ENCODE measurements at regions of chr2 and their contacts with region 1.

Region 1: DNA sequence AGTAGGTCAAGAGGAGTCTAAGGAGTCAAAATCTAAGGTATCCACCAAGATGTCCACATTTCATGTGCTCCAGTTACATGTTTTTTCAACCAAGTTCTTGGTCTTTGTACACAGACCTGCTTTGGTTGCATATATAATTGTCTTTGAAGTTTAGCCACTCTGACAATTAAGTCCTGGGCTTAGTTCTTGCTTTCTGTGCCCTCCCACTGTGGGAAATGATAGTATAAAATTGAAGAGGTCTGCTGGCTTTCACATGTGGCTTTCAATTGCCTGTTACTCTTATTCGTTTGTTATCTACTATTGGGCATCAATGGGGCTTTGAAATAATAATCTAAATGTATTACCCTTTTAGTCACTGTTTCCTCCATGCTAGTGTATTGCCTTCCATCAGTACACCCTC is 72.8 kb downstream of the TBR1 start:
- DNase-seq: no peak
- ATAC-seq: no peak
- H3K4me3 Mint-ChIP-seq: no peak overlapping the region
- H3K27ac Mint-ChIP-seq: no peak overlapping the region
- H3K4me1 Mint-ChIP-seq: no peaks in the 10 kb centered on the region
- H3K27me3 Mint-ChIP-seq: peaks cover 11% of the 10 kb centered on the region

Region 2: DNA sequence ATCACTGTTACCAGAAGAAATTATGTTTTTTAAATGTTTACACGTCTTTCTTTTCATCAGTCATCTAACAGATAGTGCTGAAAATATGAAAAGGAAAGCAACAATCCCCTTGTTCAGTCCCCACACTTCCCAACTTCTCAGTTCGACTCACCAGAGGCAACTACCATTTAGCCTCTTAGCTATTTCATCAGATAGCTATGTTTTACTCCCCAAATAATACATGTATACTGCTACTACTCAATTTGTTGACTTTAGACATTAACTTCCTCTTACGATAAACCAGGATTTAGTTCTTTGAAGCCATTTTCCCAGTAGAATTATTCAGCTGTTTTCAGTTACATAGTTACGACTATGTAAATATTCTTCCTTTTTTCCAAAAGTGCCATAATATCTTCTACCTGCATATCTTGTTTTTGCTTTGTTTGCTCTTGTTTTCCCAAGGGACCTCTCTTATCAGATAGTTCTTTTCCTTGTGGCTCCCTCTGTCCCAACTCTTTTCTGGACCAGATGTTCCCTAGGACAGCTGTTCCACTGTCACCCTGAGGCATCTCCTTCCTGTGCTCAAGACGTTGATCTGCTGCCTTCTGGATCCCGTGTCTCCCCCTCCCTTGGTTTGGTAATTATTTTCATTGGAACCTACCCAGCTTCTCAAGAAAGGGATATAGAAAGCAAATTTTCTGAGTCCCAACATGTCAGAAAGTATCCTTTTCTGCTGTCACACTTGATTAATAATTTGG is 618.0 kb before region 1 on chr2:
- CTCF ChIA-PET with region 1: no interaction called
- POLR2A ChIA-PET with region 1: interaction called, 10 read pairs
- intact Hi-C with region 1: no loop called
- DNase-seq: no peak
- ATAC-seq: no peak
- H3K4me3 Mint-ChIP-seq: no peak overlapping the region
- H3K27ac Mint-ChIP-seq: no peak overlapping the region
- H3K4me1 Mint-ChIP-seq: no peaks in the 10 kb centered on the region
- H3K27me3 Mint-ChIP-seq: no peaks in the 10 kb centered on the region

Region 3: GRCh38 chr2:162261032-162261945 is 772.4 kb after region 1 on chr2:
- CTCF ChIA-PET with region 1: no interaction called
- POLR2A ChIA-PET with region 1: no interaction called
- intact Hi-C with region 1: no loop called
- DNase-seq: no peak
- ATAC-seq: peak; percentile 55
- H3K4me3 Mint-ChIP-seq: no peak overlapping the region
- H3K27ac Mint-ChIP-seq: no peak overlapping the region
- H3K4me1 Mint-ChIP-seq: peaks cover 11% of the 10 kb centered on the region
- H3K27me3 Mint-ChIP-seq: peaks cover 2% of the 10 kb centered on the region